ENCODE measurements at regions of chr11 and their contacts with region 1.

Region 1: DNA sequence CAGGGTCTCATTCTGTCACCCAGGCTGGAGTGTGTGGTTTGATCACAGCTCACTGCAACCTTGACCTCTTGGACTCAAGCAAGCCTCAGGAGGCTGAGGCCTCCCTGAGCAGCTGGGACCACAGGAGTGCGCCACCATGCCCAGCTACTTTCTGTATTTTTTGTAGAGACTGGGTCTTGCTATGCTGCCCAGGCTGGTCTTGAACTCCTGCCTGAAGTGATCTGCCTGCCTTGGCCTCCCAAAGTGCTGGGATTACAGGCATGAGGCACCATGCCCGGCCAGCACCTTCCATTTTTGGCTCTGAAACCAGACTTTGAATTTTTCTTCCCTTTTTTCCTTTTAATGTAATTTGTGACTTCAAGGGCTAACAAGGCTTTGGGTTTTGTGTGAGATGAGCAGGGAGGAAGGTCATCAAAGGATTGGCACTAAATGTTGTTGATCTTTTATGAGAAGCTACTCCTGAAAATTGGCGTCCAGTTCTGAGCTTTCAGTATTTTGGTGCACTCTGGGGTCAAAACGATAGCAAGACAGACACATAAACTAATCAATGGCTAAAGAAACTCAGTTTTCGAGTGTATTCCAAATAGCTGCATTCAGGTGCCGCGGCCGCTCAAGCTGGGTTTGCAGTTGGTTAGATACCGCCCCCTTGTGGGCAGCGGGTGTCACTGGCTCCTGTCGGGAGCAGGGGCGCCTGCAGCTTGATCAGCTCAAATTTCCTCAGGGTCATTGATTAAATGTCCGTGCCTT is 51.9 kb upstream of the CLMP start:
- DNase-seq: peak; percentile 89
- H3K4me3 Mint-ChIP-seq: no peak overlapping the region
- H3K27ac Mint-ChIP-seq: no peak overlapping the region
- H3K4me1 Mint-ChIP-seq: peaks cover 9% of the 10 kb centered on the region
- H3K27me3 Mint-ChIP-seq: peaks cover 35% of the 10 kb centered on the region

Region 2: GRCh38 chr11:122976734-122977469 is 270.0 kb before region 1 on chr11:
- CTCF ChIA-PET with region 1: no interaction called
- DNase-seq: no peak
- H3K4me3 Mint-ChIP-seq: no peak overlapping the region
- H3K27ac Mint-ChIP-seq: peak overlapping the region; percentile 5
- H3K4me1 Mint-ChIP-seq: peaks cover 18% of the 10 kb centered on the region
- H3K27me3 Mint-ChIP-seq: peaks cover 74% of the 10 kb centered on the region

Region 3: GRCh38 chr11:123054301-123055065 is 192.4 kb before region 1 on chr11:
- CTCF ChIA-PET with region 1: interaction called, 19 read pairs
- DNase-seq: peak; percentile 39
- H3K4me3 Mint-ChIP-seq: no peak overlapping the region
- H3K27ac Mint-ChIP-seq: peak overlapping the region; percentile 80
- H3K4me1 Mint-ChIP-seq: peaks cover 49% of the 10 kb centered on the region
- H3K27me3 Mint-ChIP-seq: no peaks in the 10 kb centered on the region

Region 4: GRCh38 chr11:123110356-123110755 is 136.6 kb before region 1 on chr11:
- CTCF ChIA-PET with region 1: interaction called, 163 read pairs
- DNase-seq: peak; percentile 25
- H3K4me3 Mint-ChIP-seq: no peak overlapping the region
- H3K27ac Mint-ChIP-seq: no peak overlapping the region
- H3K4me1 Mint-ChIP-seq: peaks cover 15% of the 10 kb centered on the region
- H3K27me3 Mint-ChIP-seq: peaks cover 20% of the 10 kb centered on the region

Region 5: DNA sequence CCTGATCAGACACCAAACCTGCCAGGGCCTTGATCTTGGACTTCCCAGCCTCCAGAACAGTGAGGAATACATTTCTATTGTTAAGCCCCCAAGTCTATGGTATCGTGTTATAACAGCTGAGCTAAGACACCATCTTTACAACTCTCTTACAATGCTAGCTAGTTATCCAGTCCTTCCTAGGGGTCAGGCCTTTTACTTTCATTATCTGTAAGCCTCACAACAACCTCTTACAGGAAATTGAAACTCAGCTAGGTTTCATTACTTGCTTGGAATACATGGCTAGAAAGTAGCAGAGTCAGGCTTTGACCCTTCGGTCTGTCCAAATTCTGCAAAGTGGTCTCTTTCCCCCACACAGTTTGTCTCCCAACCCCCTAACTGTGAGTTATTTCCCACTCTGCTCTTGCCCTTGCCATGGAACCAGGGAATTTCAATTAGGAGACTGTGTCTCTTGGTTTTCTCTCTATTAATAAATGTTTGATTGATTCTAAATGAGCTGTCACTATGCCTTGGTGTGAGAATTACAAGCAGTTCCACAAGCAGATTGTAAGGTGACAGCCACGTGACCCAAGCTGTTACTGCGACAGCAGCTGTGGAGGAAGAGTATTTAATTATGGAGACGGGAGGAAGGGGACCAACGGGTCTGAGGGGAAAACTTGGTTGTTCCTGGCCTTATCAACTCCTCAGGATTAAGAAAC is 13.5 kb before region 1 on chr11:
- CTCF ChIA-PET with region 1: interaction called, 23 read pairs
- DNase-seq: no peak
- H3K4me3 Mint-ChIP-seq: no peak overlapping the region
- H3K27ac Mint-ChIP-seq: peak overlapping the region; percentile 93
- H3K4me1 Mint-ChIP-seq: peaks cover 39% of the 10 kb centered on the region
- H3K27me3 Mint-ChIP-seq: peaks cover 18% of the 10 kb centered on the region

Region 6: GRCh38 chr11:123301696-123302400 is 54.9 kb after region 1 on chr11:
- CTCF ChIA-PET with region 1: no interaction called
- DNase-seq: peak; percentile 78
- H3K4me3 Mint-ChIP-seq: peak overlapping the region; percentile 54
- H3K27ac Mint-ChIP-seq: no peak overlapping the region
- H3K4me1 Mint-ChIP-seq: peaks cover 46% of the 10 kb centered on the region
- H3K27me3 Mint-ChIP-seq: no peaks in the 10 kb centered on the region

Region 7: GRCh38 chr11:123478352-123478987 is 231.5 kb after region 1 on chr11:
- CTCF ChIA-PET with region 1: interaction called, 17 read pairs
- DNase-seq: peak; percentile 53
- H3K4me3 Mint-ChIP-seq: no peak overlapping the region
- H3K27ac Mint-ChIP-seq: no peak overlapping the region
- H3K4me1 Mint-ChIP-seq: peaks cover 32% of the 10 kb centered on the region
- H3K27me3 Mint-ChIP-seq: no peaks in the 10 kb centered on the region

Measured in activated naive CD4-positive, alpha-beta T cell treated with anti-CD3 and anti-CD28 coated beads, Interleukin-2, amount 10 ng/mL, durations not matched to agents 7 days and 5 days (primary cell).